Colonic mucosa (tissue), 4 donors: ENCODE measurements at regions of chr12 and their contacts with region 1.

Region 1: DNA sequence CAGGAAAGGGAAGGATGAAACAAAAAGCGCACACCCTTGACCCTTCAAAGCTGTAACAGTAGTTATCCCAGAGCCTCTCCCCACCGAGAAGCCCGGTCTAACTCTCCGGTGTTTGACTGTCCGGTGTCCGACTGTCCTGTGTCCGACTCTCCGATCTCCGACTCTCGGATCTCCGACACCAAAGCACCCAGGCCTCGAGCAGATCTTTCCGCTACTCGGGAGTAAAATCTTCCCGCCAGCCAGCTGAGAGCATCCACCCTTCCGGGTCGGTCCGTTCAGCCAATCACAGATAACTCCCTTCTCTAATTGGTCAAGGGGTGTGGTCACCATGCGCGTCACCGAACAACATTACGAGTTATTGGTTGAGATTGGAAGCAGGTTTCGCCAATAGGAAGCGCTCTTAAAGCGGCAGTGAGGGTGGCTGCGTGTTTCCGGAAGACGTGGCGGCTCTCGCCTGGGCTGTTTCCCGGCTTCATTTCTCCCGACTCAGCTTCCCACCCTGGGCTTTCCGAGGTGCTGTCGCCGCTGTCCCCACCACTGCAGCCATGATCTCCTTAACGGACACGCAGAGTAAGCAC is at the starts of genes GOLT1B and RECQL:
- DNase-seq: peak; percentile 95
- H3K4me3 ChIP-seq: peak within 1 kb of the TSS; percentile 98
- H3K27ac ChIP-seq: peak within 1 kb of the TSS; percentile 75
- H3K4me1 ChIP-seq: peaks cover 11% of the 10 kb centered on the region
- H3K27me3 ChIP-seq: no peaks in the 10 kb centered on the region
- CTCF ChIP-seq: no peak
- total RNA-seq, gene GOLT1B: 28.3 to 35.5 TPM
- total RNA-seq, gene RECQL: 15.7 to 15.8 TPM

Region 2: GRCh38 chr12:21444193-21445146 is 57.0 kb before region 1 on chr12:
- intact Hi-C with region 1: loop called (anchors 10 kb)
- DNase-seq: no peak
- H3K4me3 ChIP-seq: no peak overlapping the region
- H3K27ac ChIP-seq: no peak overlapping the region
- H3K4me1 ChIP-seq: no peaks in the 10 kb centered on the region
- H3K27me3 ChIP-seq: no peaks in the 10 kb centered on the region
- CTCF ChIP-seq: no peak

Region 3: DNA sequence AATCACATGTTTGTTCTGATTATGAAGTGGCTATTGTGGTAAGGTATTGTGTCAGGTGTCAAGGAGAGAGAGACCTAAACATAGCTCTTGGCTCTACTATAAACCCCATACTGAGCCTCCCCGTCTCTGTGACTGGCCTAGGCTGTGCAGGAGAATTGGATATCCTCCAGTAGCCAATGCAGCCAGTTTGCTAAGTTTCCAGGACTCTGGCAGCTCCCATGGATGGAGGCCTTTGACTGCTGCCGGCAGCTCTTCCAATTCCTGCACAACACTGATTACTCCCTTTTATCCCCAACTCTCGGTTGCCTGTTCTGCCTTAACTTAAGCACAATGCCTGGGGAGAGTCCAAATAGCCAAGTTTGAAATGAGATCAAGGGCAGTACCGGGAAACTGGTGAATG is 380.5 kb after region 1 on chr12:
- intact Hi-C with region 1: no loop called
- DNase-seq: no peak
- H3K4me3 ChIP-seq: no peak overlapping the region
- H3K27ac ChIP-seq: no peak overlapping the region
- H3K4me1 ChIP-seq: no peaks in the 10 kb centered on the region
- H3K27me3 ChIP-seq: no peaks in the 10 kb centered on the region
- CTCF ChIP-seq: no peak